Endothelial cell of umbilical vein (primary cell): ENCODE measurements at regions of chr6 and their contacts with region 1.

Region 1: GRCh38 chr6:168007592-168008338 is 10.3 kb downstream of the KIF25 start:
- DNase-seq: peak; percentile 60
- H3K4me3 ChIP-seq: no peak overlapping the region
- H3K27ac ChIP-seq: peak overlapping the region; percentile 29
- H3K4me1 ChIP-seq: peaks cover 27% of the 10 kb centered on the region
- H3K27me3 ChIP-seq: no peaks in the 10 kb centered on the region
- CTCF ChIP-seq: no peak
- POLR2A ChIP-seq: no peak

Region 2: GRCh38 chr6:168035098-168035660 is 27.4 kb after region 1 on chr6:
- CTCF ChIA-PET with region 1: interaction called, 6 read pairs
- POLR2A ChIA-PET with region 1: no interaction called
- dilution Hi-C with region 1: no loop called
- intact Hi-C with region 1: loop called (anchors 1 kb)
- DNase-seq: peak; percentile 36
- H3K4me3 ChIP-seq: peak overlapping the region in 2 of 3 experiments; percentile 10 to 27
- H3K27ac ChIP-seq: peak overlapping the region; percentile 50
- H3K4me1 ChIP-seq: peaks cover 25% of the 10 kb centered on the region
- H3K27me3 ChIP-seq: no peaks in the 10 kb centered on the region
- CTCF ChIP-seq: no peak
- POLR2A ChIP-seq: no peak

Region 3: DNA sequence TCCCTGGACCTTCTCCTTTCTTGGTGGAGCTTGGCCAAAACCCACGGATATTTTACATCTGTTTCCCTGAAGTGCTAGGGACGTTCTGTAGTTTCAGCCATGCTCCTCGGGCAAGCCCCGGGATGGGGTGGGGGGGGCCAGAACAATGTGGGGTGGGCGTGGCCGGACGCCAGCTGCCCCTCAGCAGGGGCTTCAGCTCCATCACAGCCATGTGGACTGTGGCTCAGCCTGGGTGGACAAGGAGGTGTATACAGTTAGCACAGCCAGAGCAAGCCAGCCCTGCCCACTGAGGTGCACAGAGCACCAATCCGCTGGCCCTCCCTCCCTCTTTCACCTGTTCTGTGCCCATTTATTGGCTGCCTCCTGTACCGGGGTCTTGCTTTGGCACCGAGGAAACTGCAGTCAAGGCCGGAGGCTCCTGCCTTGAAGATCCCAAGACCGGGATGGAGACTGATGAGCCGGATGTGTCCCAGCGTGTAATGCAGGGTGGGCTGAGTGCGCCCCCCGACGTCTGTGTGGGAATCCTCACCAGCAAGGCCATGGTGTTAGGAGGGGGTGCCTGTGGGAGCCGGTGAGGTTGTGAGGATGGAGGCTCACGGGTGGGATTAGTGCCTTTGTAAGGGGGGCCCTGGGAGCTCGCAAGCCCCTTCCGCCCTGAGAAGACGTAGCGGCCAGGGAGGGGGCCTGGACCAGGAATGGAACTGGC is 43.3 kb after region 1 on chr6:
- CTCF ChIA-PET with region 1: no interaction called
- POLR2A ChIA-PET with region 1: no interaction called
- dilution Hi-C with region 1: no loop called
- intact Hi-C with region 1: no loop called
- DNase-seq: no peak
- H3K4me3 ChIP-seq: no peak overlapping the region
- H3K27ac ChIP-seq: no peak overlapping the region
- H3K4me1 ChIP-seq: no peaks in the 10 kb centered on the region
- H3K27me3 ChIP-seq: no peaks in the 10 kb centered on the region
- CTCF ChIP-seq: peak; percentile 21 to 41
- POLR2A ChIP-seq: no peak